ENCODE measurements at regions of chr12 and their contacts with region 1.

Region 1: DNA sequence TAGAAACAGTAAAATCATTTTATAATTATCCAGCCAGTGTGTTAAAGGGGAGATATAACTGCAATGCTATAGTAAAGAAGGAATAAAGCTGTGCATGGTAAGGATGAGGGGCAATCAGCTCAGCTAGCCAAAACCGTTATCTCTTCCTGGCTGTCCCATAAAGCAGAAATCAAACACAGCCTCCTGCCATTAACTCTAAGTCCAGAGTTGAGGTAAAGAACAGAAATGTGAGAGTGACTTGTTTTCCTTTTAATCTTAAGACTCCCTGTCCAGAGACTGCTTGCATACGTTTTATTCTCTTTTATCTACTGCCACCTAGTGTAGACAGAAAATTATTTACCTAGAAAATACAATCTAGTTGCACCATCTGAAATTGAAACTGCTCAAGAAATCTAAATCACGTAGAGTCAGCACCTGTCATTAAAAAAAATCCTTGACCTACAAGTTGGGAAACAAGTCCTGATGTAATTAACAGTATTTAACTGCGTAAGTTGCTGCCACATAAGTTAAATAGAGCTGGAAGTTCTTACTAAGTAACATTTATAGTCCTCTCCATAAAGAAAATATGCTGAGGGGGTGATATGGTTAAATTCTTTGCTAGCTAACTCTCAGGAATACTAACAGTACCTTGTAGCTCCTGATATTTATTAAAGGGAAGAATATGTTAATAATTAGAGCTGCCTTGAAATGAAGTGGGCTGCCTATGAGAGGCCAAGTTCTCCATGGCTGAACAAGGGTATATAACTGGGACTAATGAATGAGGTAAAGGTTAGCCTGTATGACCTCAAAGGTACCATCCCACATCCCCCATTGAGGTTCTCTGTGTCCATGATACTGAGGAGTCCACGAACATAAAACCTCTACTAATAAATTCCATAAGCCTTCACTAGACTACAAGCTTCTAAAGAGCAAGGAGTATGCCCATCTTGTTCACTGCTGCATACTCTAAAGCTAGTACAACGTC is 62.7 kb downstream of the GALNT4 start:
- H3K4me3 Mint-ChIP-seq: no peak overlapping the region
- H3K27ac Mint-ChIP-seq: no peak overlapping the region
- H3K4me1 Mint-ChIP-seq: peaks cover 7% of the 10 kb centered on the region
- H3K27me3 Mint-ChIP-seq: no peaks in the 10 kb centered on the region

Region 2: GRCh38 chr12:89019408-89020120 is 442.4 kb before region 1 on chr12:
- intact Hi-C with region 1: loop called (anchors 1 kb)
- H3K4me3 Mint-ChIP-seq: no peak overlapping the region
- H3K27ac Mint-ChIP-seq: no peak overlapping the region
- H3K4me1 Mint-ChIP-seq: no peaks in the 10 kb centered on the region
- H3K27me3 Mint-ChIP-seq: peaks cover 2% of the 10 kb centered on the region

Region 3: DNA sequence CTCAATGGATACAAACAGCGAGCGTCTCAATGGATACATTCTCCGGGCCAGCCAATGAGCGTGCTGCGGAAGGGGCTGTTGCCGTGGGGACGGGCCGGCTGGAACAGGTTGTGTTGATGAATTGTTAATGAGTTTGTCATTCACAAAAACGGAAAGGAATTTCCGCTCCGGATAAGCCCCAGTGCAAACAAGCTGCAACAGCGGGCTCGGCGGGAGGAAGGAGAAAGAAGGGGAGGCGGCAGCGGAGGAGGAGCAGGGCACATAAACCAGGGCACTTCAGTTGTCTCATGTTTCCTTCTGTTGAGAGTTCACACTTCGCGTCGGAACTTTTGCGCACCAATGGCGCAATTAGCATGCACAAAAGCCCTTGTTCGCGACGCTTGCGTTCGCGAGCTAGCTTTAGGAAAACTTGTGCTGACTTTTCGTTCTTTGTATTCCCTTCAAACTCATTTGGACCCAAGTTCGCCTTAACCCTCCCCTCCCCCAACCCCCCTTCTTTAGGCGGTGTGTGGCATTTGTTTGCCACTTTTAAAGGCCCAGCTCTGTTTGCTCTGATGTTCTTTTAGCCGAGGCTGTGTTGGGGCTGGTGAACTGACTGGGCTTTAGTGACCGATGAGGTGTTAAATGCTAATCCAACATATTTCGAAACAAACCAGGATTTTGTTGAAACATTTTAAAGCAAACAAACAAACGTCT is 109.3 kb before region 1 on chr12 and contains the start of gene DUSP6:
- intact Hi-C with region 1: loop called (anchors 2 kb)
- H3K4me3 Mint-ChIP-seq: peak within 1 kb of the TSS; percentile 92
- H3K27ac Mint-ChIP-seq: peak within 1 kb of the TSS; percentile 91
- H3K4me1 Mint-ChIP-seq: peaks cover 55% of the 10 kb centered on the region
- H3K27me3 Mint-ChIP-seq: no peaks in the 10 kb centered on the region

Region 4: GRCh38 chr12:89384050-89384758 is 77.7 kb before region 1 on chr12:
- intact Hi-C with region 1: no loop called
- H3K4me3 Mint-ChIP-seq: no peak overlapping the region
- H3K27ac Mint-ChIP-seq: no peak overlapping the region
- H3K4me1 Mint-ChIP-seq: peaks cover 46% of the 10 kb centered on the region
- H3K27me3 Mint-ChIP-seq: no peaks in the 10 kb centered on the region

Measured in dendritic cell treated with granulocyte-macrophage colony-stimulating factor and Interleukin-4, amounts not matched to agents 40 ng/mL and 50 ng/mL, for 4 days (primary cell).